Activated naive CD4-positive, alpha-beta T cell treated with anti-CD3 and anti-CD28 coated beads, Interleukin-2, amount 10 ng/mL, durations not matched to agents 7 days and 5 days (primary cell): ENCODE measurements at regions of chr6 and their contacts with region 1.

Region 1: GRCh38 chr6:155174576-155175211 is 89.1 kb upstream of the CLDN20 start:
- DNase-seq: peak; percentile 76
- H3K4me3 Mint-ChIP-seq: no peak overlapping the region
- H3K27ac Mint-ChIP-seq: peak overlapping the region; percentile 47
- H3K4me1 Mint-ChIP-seq: peaks cover 52% of the 10 kb centered on the region
- H3K27me3 Mint-ChIP-seq: no peaks in the 10 kb centered on the region

Region 2: DNA sequence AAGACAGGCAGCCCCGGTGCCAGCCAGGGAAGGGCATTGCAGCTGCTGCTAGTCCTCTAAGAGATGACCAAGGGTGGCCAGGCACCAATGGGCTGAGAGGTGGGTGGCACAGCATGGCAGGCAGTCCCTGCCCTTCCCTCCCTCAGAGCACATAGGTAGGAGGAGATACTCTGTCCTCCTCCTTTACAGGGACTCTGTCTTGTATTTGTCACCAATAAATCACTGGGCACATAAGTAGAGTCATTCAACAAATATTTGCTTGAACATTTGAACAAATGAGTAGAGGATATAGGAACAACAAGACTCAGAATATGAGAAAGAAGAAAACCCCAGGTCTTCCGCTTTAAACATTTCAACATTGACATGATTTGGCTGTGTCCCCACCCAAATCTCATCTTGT is 19.7 kb after region 1 on chr6:
- CTCF ChIA-PET with region 1: no interaction called
- DNase-seq: no peak
- H3K4me3 Mint-ChIP-seq: no peak overlapping the region
- H3K27ac Mint-ChIP-seq: no peak overlapping the region
- H3K4me1 Mint-ChIP-seq: peaks cover 7% of the 10 kb centered on the region
- H3K27me3 Mint-ChIP-seq: peaks cover 5% of the 10 kb centered on the region

Region 3: DNA sequence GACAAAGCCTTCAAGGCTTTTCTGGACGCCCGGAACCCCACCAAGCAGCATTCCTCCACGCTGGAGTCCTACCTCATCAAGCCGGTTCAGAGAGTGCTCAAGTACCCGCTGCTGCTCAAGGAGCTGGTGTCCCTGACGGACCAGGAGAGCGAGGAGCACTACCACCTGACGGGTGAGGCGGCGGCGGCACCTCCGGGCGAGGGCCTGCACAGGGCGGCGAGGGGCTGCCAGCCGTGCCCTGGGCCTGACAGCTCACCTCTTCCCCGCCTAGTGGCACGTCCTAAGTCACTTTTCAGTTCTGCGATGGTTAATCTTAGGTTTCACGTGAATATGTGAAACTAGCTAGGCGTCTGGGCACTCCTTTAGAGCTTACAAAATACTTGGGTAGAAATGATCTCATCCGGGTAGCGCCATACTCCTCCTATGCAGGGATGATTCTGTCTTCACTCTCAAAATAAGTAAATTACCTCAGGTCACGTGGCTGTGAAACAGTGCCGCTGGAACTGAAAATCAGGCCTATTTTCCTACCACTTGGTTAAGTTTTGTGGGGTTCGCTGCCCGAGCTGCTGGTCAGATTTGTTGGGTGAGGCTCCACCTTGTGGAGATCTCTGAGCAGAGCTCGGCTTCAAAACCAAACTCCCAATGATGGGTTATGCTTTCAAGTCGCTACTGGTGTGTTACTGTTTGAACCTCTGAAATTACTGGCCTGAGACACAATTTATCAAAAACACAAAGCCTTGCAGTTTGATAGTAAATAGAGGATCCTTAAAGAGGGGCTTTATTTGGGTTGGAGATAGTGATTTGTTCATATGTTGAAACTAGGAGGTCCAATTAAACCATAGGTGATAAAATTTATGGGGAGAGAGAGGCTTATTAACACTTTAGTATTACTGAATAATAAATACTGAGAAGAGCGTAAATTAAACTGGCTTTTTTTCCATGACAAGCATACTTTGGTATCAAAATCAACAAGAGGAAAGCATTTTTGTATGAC is 73.6 kb after region 1 on chr6:
- CTCF ChIA-PET with region 1: interaction called, 54 read pairs
- DNase-seq: no peak
- H3K4me3 Mint-ChIP-seq: no peak overlapping the region
- H3K27ac Mint-ChIP-seq: no peak overlapping the region
- H3K4me1 Mint-ChIP-seq: no peaks in the 10 kb centered on the region
- H3K27me3 Mint-ChIP-seq: no peaks in the 10 kb centered on the region

Region 4: GRCh38 chr6:155265843-155266535 is 91.3 kb after region 1 on chr6:
- CTCF ChIA-PET with region 1: interaction called, 25 read pairs
- DNase-seq: no peak
- H3K4me3 Mint-ChIP-seq: no peak overlapping the region
- H3K27ac Mint-ChIP-seq: no peak overlapping the region
- H3K4me1 Mint-ChIP-seq: peaks cover 4% of the 10 kb centered on the region
- H3K27me3 Mint-ChIP-seq: no peaks in the 10 kb centered on the region

Region 5: GRCh38 chr6:155314092-155314772 is 139.5 kb after region 1 on chr6 and contains the start of gene TFB1M:
- CTCF ChIA-PET with region 1: interaction called, 51 read pairs
- DNase-seq: peak; percentile 99
- H3K4me3 Mint-ChIP-seq: peak within 1 kb of the TSS; percentile 98
- H3K27ac Mint-ChIP-seq: peak within 1 kb of the TSS; percentile 95
- H3K4me1 Mint-ChIP-seq: peaks cover 43% of the 10 kb centered on the region
- H3K27me3 Mint-ChIP-seq: no peaks in the 10 kb centered on the region